PC-9 (cell line): ENCODE measurements at regions of chr7 and their contacts with region 1.

Region 1: DNA sequence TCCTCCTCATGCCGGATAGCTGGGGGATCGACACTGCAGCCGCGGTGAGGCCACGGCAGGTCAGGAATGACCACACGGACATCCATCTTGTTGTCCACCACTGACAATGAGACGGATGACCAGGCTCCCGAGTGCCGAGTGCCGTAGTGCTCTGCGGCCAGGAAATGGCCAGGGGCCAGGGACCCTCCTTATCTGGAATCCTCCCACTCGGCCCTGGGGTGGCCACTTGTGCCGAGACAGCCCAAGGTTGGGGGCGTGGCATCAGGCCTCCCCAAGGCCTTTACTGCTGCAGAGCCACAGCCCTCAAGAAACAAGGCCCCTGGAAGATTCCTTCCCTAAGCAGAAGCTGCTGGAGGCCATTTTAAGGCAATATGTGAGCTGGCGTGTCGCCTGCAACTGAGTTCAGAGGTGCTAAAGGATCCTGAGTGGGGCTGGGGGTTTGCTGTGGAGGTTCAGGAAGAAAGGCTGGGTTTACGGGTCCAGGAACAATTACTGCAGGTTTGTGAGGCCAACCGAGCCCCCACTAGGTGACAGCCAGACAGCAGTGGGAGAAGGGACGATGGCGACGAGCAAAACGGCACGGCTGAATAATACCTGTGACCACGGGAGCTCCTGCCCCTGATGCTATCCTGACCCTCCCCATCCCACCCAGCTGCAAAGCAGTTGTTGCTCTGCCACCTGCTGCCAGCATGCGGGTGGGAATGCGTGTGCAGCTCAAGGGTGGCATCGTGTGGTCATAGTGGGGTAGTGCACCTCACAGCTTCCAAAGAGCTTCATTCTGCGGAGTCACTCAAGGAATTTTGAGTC is 31.6 kb upstream of the LEP start:
- DNase-seq: peak; percentile 68 to 76
- H3K4me3 ChIP-seq: no peak overlapping the region
- H3K27ac ChIP-seq: no peak overlapping the region
- H3K4me1 ChIP-seq: no peaks in the 10 kb centered on the region
- H3K27me3 ChIP-seq: peaks cover 5% of the 10 kb centered on the region; the same call in 1 of the 2 replicates
- CTCF ChIP-seq: peak; percentile 97

Region 2: GRCh38 chr7:127392566-127393367 is 816.7 kb before region 1 on chr7 and contains the start of gene ZNF800:
- CTCF ChIA-PET with region 1: interaction called, 3 read pairs
- POLR2A ChIA-PET with region 1: no interaction called
- intact Hi-C with region 1: loop called (anchors 2 kb)
- DNase-seq: peak; percentile 58 to 90
- H3K4me3 ChIP-seq: peak within 1 kb of the TSS; percentile 99
- H3K27ac ChIP-seq: peak within 1 kb of the TSS; percentile 54
- H3K4me1 ChIP-seq: peaks cover 22% of the 10 kb centered on the region
- H3K27me3 ChIP-seq: no peaks in the 10 kb centered on the region
- CTCF ChIP-seq: no peak
- total RNA-seq, gene ZNF800: 32.4 and 32.6 TPM in 2 replicates

Region 3: GRCh38 chr7:127708788-127709187 is 500.6 kb before region 1 on chr7:
- CTCF ChIA-PET with region 1: interaction called, 14 read pairs
- POLR2A ChIA-PET with region 1: no interaction called
- intact Hi-C with region 1: loop called (anchors 1 kb)
- DNase-seq: peak; percentile 46 to 54
- H3K4me3 ChIP-seq: no peak overlapping the region
- H3K27ac ChIP-seq: no peak overlapping the region
- H3K4me1 ChIP-seq: no peaks in the 10 kb centered on the region
- H3K27me3 ChIP-seq: no peaks in the 10 kb centered on the region
- CTCF ChIP-seq: peak; percentile 82

Region 4: GRCh38 chr7:128035712-128036111 is 173.7 kb before region 1 on chr7:
- CTCF ChIA-PET with region 1: interaction called, 4 read pairs
- POLR2A ChIA-PET with region 1: no interaction called
- intact Hi-C with region 1: loop called (anchors 2 kb)
- DNase-seq: no peak
- H3K4me3 ChIP-seq: no peak overlapping the region
- H3K27ac ChIP-seq: no peak overlapping the region
- H3K4me1 ChIP-seq: no peaks in the 10 kb centered on the region
- H3K27me3 ChIP-seq: no peaks in the 10 kb centered on the region
- CTCF ChIP-seq: no peak

Region 5: DNA sequence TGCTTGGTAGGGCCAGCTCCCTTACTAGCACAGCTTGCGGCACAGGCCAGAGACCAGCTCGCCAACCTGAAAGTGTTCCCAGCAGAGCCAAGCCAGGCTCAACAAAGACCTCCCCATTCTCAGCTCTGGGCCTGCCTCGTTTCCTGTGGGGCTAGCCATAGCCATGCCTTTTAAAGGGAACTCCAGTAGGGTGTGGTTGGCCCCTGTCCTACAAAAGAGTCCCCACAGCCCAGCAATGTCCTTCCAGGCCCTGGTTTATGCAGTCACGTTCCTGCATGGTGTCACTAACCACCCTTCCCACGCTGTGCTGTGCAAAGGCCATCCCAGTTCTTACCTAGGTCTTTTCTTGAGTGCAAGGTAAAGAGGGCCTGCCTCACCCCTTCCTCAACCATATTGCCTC is 90.4 kb before region 1 on chr7:
- CTCF ChIA-PET with region 1: no interaction called
- POLR2A ChIA-PET with region 1: no interaction called
- intact Hi-C with region 1: no loop called
- DNase-seq: no peak
- H3K4me3 ChIP-seq: no peak overlapping the region
- H3K27ac ChIP-seq: no peak overlapping the region
- H3K4me1 ChIP-seq: 0 out of 2 replicates have a peak, but pooled peaks cover 5% of the 10 kb centered on the region
- H3K27me3 ChIP-seq: no peaks in the 10 kb centered on the region
- CTCF ChIP-seq: no peak

Region 6: GRCh38 chr7:128135515-128136214 is 73.8 kb before region 1 on chr7:
- CTCF ChIA-PET with region 1: interaction called, 41 read pairs
- POLR2A ChIA-PET with region 1: no interaction called
- intact Hi-C with region 1: loop called (anchors 1 kb)
- DNase-seq: peak in 1 of 2 experiments; percentile 72
- H3K4me3 ChIP-seq: peak overlapping the region; percentile 82
- H3K27ac ChIP-seq: no peak overlapping the region
- H3K4me1 ChIP-seq: no peaks in the 10 kb centered on the region
- H3K27me3 ChIP-seq: 0 out of 2 replicates have a peak, but pooled peaks cover 9% of the 10 kb centered on the region
- CTCF ChIP-seq: peak; percentile 64

Region 7: GRCh38 chr7:128322040-128322643 is 112.7 kb after region 1 on chr7:
- CTCF ChIA-PET with region 1: interaction called, 6 read pairs
- POLR2A ChIA-PET with region 1: no interaction called
- intact Hi-C with region 1: loop called (anchors 1 kb)
- DNase-seq: peak; percentile 14 to 43
- H3K4me3 ChIP-seq: no peak overlapping the region
- H3K27ac ChIP-seq: no peak overlapping the region
- H3K4me1 ChIP-seq: no peaks in the 10 kb centered on the region
- H3K27me3 ChIP-seq: no peaks in the 10 kb centered on the region
- CTCF ChIP-seq: peak; percentile 66